ENCODE measurements at regions of chr1 and their contacts with region 1.

Region 1: DNA sequence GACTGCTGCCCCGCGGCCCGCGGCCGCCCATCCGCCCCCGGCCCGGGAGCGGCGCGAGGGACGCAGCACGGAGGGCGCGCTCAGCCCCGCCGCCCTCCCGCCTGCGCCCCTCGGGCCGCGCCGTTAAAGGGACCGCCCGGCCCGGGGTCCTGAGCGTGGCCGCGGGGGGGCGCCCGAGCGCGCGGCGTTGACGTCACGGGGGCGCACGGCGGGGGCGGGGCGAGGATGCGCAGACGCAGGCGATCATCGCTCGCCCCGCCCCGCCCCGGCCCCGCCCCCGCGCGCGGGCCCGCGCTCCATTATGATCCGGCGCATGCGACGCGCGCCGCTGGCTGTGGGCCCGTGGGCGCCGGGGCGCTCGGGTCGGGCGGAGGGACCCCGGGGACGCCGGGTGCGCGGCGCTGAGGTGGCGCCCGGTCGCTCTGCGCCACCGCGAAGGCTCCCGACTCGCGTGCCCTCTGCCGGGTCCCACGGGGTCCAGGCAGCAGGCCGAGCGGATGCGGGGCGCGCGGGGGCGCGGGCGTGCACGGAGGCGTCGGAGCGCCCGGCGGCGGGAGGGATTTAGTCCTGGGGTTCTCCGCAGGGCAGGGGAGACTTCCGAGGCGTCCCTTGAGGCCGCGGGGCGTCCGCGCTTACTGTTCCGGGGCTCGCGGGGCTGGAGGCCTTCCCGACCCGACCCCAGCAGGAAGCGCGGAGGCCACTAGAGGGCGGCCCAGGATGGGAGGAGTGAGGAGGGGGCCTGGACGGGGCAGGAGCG is at the start of gene DVL1:
- DNase-seq: peak; percentile 73 to 77
- H3K4me3 ChIP-seq: peak within 1 kb of the TSS; percentile 79
- H3K4me3 Mint-ChIP-seq: peak within 1 kb of the TSS; percentile 70
- H3K27ac Mint-ChIP-seq: no peak within 1 kb of the TSS
- H3K4me1 ChIP-seq: peaks cover 22% of the 10 kb centered on the region
- H3K4me1 Mint-ChIP-seq: no peaks in the 10 kb centered on the region
- H3K27me3 ChIP-seq: no peaks in the 10 kb centered on the region
- H3K27me3 Mint-ChIP-seq: no peaks in the 10 kb centered on the region
- CTCF ChIP-seq: peak; percentile 34 to 54
- total RNA-seq, gene DVL1: 40.6 and 43.0 TPM in 2 replicates

Region 2: GRCh38 chr1:1451696-1452367 is 102.4 kb after region 1 on chr1:
- CTCF ChIA-PET with region 1: no interaction called
- POLR2A ChIA-PET with region 1: no interaction called
- intact Hi-C with region 1: no loop called
- DNase-seq: no peak
- H3K4me3 ChIP-seq: no peak overlapping the region
- H3K4me3 Mint-ChIP-seq: no peak overlapping the region
- H3K27ac Mint-ChIP-seq: no peak overlapping the region
- H3K4me1 ChIP-seq: no peaks in the 10 kb centered on the region
- H3K4me1 Mint-ChIP-seq: peaks cover 8% of the 10 kb centered on the region
- H3K27me3 ChIP-seq: no peaks in the 10 kb centered on the region
- H3K27me3 Mint-ChIP-seq: no peaks in the 10 kb centered on the region
- CTCF ChIP-seq: no peak

Region 3: GRCh38 chr1:1489231-1489630 is 139.8 kb after region 1 on chr1:
- CTCF ChIA-PET with region 1: no interaction called
- POLR2A ChIA-PET with region 1: no interaction called
- intact Hi-C with region 1: no loop called
- DNase-seq: no peak
- H3K4me3 ChIP-seq: no peak overlapping the region
- H3K4me3 Mint-ChIP-seq: no peak overlapping the region
- H3K27ac Mint-ChIP-seq: no peak overlapping the region
- H3K4me1 ChIP-seq: no peaks in the 10 kb centered on the region
- H3K4me1 Mint-ChIP-seq: no peaks in the 10 kb centered on the region
- H3K27me3 ChIP-seq: no peaks in the 10 kb centered on the region
- H3K27me3 Mint-ChIP-seq: no peaks in the 10 kb centered on the region
- CTCF ChIP-seq: no peak

Region 4: DNA sequence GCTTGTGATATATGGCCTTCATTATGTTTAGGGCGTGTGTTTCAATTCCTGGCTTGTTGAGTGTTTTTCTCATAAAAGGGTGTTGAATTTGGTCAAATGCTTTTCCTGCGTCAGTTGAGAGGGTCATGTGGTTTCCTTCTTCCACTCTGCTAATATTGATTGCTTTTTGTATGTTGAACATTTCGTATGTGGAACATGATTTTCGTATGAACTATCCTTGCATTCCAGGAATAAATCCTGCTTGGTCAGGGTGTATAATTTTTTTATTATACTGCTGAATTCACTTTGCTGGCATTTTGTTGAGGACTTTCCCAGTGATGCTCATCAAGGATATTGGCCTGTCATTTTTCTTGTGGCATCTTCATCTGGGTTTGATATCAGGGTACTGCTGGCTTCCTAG is 157.9 kb after region 1 on chr1:
- CTCF ChIA-PET with region 1: no interaction called
- POLR2A ChIA-PET with region 1: no interaction called
- intact Hi-C with region 1: loop called (anchors 10 kb)
- DNase-seq: no peak
- H3K4me3 ChIP-seq: no peak overlapping the region
- H3K4me3 Mint-ChIP-seq: no peak overlapping the region
- H3K27ac Mint-ChIP-seq: no peak overlapping the region
- H3K4me1 ChIP-seq: no peaks in the 10 kb centered on the region
- H3K4me1 Mint-ChIP-seq: no peaks in the 10 kb centered on the region
- H3K27me3 ChIP-seq: no peaks in the 10 kb centered on the region
- H3K27me3 Mint-ChIP-seq: no peaks in the 10 kb centered on the region
- CTCF ChIP-seq: no peak

Measured in Caco-2 (cell line).